Posterior vena cava (tissue), 2 donors: ENCODE measurements at regions of chr1 and their contacts with region 1.

Region 1: DNA sequence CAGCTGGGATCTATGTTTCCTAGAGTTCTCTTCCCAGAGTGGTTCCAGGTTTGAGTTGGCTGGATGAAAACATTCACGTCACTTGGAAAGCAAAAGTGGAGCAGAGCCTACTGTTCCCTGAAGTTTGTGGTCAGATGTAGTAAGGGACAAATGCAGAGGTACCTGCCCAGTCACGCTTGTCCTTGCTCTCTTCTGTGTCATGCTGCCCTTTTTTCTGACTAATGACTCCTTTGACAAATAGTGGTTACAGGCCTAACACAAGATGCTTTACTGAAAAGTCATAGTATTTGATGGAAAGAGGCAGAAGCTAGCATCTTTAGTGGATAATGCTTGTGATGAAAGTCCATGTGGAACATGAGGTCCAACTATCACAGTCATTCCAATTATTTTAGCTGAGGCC is 881.4 kb upstream of the B3GALT2 start:
- DNase-seq: no peak

Region 2: GRCh38 chr1:193794239-193794638 is 273.5 kb before region 1 on chr1:
- intact Hi-C with region 1: no loop called
- DNase-seq: no peak

Region 3: DNA sequence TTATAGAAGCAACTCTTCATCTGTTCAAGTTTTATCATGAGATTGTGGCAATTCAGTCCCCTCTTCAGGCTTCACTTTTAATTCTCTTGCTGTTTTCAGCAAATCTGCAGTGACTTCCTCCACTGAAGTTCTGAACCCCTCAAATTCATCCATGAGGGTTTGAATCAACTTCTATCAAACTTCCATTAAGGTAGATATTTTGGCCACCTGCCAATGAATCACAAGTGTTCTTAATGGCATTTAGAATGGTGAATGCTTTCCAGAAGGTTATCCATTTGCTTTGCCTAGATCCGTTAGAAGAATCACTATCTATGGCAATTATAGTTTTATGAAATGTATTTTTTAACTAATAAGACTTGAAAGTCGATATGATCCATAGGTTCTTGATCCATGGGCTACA is 65.4 kb after region 1 on chr1:
- intact Hi-C with region 1: loop called in 1 of 2 experiments (anchors 2 kb)
- DNase-seq: no peak

Region 4: GRCh38 chr1:194268839-194269238 is 201.1 kb after region 1 on chr1:
- intact Hi-C with region 1: no loop called
- DNase-seq: no peak